CD8-positive, alpha-beta T cell (primary cell): ENCODE measurements at regions of chr4 and their contacts with region 1.

Region 1: DNA sequence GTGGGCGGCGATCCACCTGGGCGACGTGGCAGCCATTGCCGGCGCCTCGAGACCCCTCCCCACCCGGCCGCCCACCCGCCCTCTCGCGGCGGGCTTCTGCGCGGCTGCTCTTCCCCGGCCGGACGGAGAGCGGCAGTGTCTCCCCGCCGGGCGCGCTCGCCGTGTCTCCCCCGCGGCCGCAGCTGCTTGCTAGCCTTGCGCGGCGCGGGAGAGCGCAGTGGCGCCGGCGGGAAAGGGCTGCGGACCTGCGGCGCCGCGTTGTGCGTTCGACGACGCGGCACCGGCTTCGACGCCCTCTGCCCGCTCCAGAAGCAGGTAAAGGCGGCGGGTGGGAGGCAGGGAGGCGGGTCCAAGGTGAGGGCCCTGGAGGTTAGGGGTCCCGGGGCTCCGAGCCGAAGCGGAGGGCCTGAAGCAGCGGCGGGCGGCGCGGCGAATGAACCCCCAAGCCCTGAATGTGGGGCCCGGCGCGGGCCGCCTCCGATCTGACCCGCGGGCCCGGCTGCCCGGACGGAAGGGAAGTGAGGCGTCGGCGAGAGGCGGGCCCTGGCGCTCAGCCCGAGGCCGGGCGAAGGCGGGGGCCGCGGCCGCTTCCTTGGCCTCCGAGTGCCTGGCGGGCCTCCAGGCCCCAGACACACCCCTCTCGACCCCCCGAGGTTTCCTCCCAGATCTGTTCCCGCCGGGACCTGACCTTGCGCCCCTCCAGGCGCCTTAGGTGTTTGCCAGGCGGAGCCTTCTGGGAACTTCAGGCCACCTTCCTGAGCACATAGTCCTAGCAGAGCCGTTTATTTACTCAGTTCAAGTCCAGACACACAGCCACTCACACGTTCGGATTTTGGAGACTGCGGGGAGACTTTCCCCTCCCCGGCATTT is at the start of gene N4BP2:
- DNase-seq: peak; percentile 46 to 89 (median 71)
- ATAC-seq: peak; percentile 65
- H3K4me3 ChIP-seq: peak within 1 kb of the TSS; percentile 76 to 92
- H3K4me3 Mint-ChIP-seq: peak within 1 kb of the TSS; percentile 94
- H3K27ac ChIP-seq: peak within 1 kb of the TSS; percentile 70 to 87
- H3K27ac Mint-ChIP-seq: peak within 1 kb of the TSS; percentile 94
- H3K4me1 ChIP-seq: peaks cover 21% of the 10 kb centered on the region
- H3K4me1 Mint-ChIP-seq: peaks cover 36% of the 10 kb centered on the region
- H3K27me3 ChIP-seq: no peaks in the 10 kb centered on the region
- H3K27me3 Mint-ChIP-seq: no peaks in the 10 kb centered on the region
- CTCF ChIP-seq: peak; percentile 79
- total RNA-seq, gene N4BP2: 19.5 to 20.4 TPM

Region 2: DNA sequence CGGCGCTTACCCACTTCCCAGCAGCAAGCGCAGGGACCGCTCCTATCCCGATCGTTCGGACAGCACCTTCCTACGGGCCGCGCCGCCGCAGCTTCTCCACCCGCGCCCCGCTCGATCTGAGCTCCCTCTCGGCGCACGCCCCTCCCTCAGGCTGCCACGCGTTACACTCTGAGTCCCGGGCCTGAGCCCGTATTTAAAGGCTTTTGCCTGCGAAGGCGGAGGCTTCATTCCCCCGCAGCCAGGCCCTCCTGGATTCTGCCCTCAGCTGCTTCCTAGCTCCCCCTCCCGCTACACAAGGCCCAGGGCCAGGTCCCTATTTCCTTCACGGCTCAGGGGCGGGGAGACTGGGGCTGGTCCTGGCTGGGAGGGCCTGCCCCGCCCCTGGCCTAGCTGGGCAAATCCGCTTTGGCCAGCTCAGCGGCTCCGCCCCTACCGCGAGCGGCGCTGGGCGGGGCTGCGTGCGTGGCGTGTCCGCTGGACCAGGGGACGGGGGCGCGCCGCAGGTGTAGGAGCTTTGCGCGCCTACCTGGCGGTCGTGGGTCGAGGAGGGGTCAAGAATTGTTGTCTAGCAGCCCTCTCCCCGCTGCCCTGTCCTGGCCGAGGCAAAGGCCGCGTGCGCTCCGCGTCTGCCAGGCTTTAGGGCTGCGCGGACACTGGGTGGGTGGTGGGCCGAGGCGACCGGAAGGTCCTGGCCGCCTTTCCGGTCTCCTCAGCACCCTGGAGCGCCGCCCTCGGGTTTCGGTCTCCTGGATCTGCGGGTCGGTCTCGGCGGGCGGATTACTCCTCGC is 529.5 kb before region 1 on chr4 and contains the start of gene UGDH:
- CTCF ChIA-PET with region 1: no interaction called
- POLR2A ChIA-PET with region 1: no interaction called
- intact Hi-C with region 1: loop called in 1 of 2 experiments (anchors 5 kb)
- DNase-seq: peak; percentile 81 to 96 (median 90)
- ATAC-seq: peak; percentile 98
- H3K4me3 ChIP-seq: peak within 1 kb of the TSS; percentile 87 to 89
- H3K4me3 Mint-ChIP-seq: peak within 1 kb of the TSS; percentile 96
- H3K27ac ChIP-seq: peak within 1 kb of the TSS; percentile 68 to 74
- H3K27ac Mint-ChIP-seq: peak within 1 kb of the TSS; percentile 93
- H3K4me1 ChIP-seq: peaks cover 17% of the 10 kb centered on the region
- H3K4me1 Mint-ChIP-seq: peaks cover 24% of the 10 kb centered on the region
- H3K27me3 ChIP-seq: no peaks in the 10 kb centered on the region
- H3K27me3 Mint-ChIP-seq: no peaks in the 10 kb centered on the region
- CTCF ChIP-seq: no peak
- total RNA-seq, gene UGDH: 2.6 to 3.6 TPM

Region 3: DNA sequence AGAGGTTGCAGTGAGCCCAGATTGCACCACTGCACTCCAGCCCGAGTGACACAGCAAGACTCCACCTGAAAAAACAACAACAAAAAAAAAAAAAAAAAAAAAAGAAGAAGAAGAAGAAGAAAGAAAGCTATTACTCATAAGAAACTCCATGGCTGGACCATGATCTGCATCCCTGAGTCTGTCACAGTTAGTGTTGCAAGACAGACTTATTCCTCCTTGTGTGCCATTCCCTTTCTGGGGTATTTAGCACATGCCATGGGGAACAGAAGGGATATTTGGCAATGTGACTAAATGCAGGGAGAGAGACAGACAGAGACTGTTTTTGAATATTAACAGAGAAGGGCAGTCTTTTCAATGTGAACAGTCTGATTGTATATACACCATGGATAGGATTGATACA is 62.5 kb before region 1 on chr4:
- CTCF ChIA-PET with region 1: interaction called, 6 read pairs
- POLR2A ChIA-PET with region 1: no interaction called
- intact Hi-C with region 1: loop called in 1 of 2 experiments (anchors 5 kb)
- DNase-seq: no peak
- ATAC-seq: no peak
- H3K4me3 ChIP-seq: no peak overlapping the region
- H3K4me3 Mint-ChIP-seq: no peak overlapping the region
- H3K27ac ChIP-seq: no peak overlapping the region
- H3K27ac Mint-ChIP-seq: no peak overlapping the region
- H3K4me1 ChIP-seq: no peaks in the 10 kb centered on the region
- H3K4me1 Mint-ChIP-seq: no peaks in the 10 kb centered on the region
- H3K27me3 ChIP-seq: no peaks in the 10 kb centered on the region
- H3K27me3 Mint-ChIP-seq: no peaks in the 10 kb centered on the region
- CTCF ChIP-seq: no peak

Region 4: GRCh38 chr4:40193016-40193571 is 136.1 kb after region 1 on chr4:
- CTCF ChIA-PET with region 1: no interaction called
- POLR2A ChIA-PET with region 1: interaction called, 5 read pairs
- intact Hi-C with region 1: loop called (anchors 1 to 5 kb)
- DNase-seq: peak in 6 of 9 experiments; percentile 49 to 82 (median 65)
- ATAC-seq: peak; percentile 14
- H3K4me3 ChIP-seq: peak overlapping the region; percentile 36 to 42
- H3K4me3 Mint-ChIP-seq: peak overlapping the region; percentile 100
- H3K27ac ChIP-seq: peak overlapping the region; percentile 60 to 96
- H3K27ac Mint-ChIP-seq: peak overlapping the region; percentile 100
- H3K4me1 ChIP-seq: peaks cover 52% of the 10 kb centered on the region
- H3K4me1 Mint-ChIP-seq: peaks cover 64% of the 10 kb centered on the region
- H3K27me3 ChIP-seq: no peaks in the 10 kb centered on the region
- H3K27me3 Mint-ChIP-seq: no peaks in the 10 kb centered on the region
- CTCF ChIP-seq: no peak

Region 5: GRCh38 chr4:40238700-40239548 is 182.0 kb after region 1 on chr4:
- CTCF ChIA-PET with region 1: interaction called, 3 read pairs
- POLR2A ChIA-PET with region 1: interaction called, 3 read pairs
- intact Hi-C with region 1: loop called (anchors 5 kb)
- DNase-seq: peak; percentile 63 to 96 (median 73)
- ATAC-seq: peak; percentile 90
- H3K4me3 ChIP-seq: peak overlapping the region; percentile 46 to 48
- H3K4me3 Mint-ChIP-seq: peak overlapping the region; percentile 82
- H3K27ac ChIP-seq: peak overlapping the region; percentile 68 to 98
- H3K27ac Mint-ChIP-seq: peak overlapping the region; percentile 95
- H3K4me1 ChIP-seq: peaks cover 95% of the 10 kb centered on the region
- H3K4me1 Mint-ChIP-seq: peaks cover 94% of the 10 kb centered on the region
- H3K27me3 ChIP-seq: no peaks in the 10 kb centered on the region
- H3K27me3 Mint-ChIP-seq: no peaks in the 10 kb centered on the region
- CTCF ChIP-seq: no peak

Region 6: GRCh38 chr4:40316782-40317635 is 260.1 kb after region 1 on chr4:
- CTCF ChIA-PET with region 1: interaction called, 9 read pairs
- POLR2A ChIA-PET with region 1: interaction called, 5 read pairs
- intact Hi-C with region 1: loop called (anchors 2 kb)
- DNase-seq: peak; percentile 39 to 89 (median 62)
- ATAC-seq: peak; percentile 66
- H3K4me3 ChIP-seq: peak overlapping the region; percentile 38 to 43
- H3K4me3 Mint-ChIP-seq: peak overlapping the region; percentile 82
- H3K27ac ChIP-seq: peak overlapping the region; percentile 63 to 81
- H3K27ac Mint-ChIP-seq: peak overlapping the region; percentile 95
- H3K4me1 ChIP-seq: peaks cover 24% of the 10 kb centered on the region
- H3K4me1 Mint-ChIP-seq: peaks cover 45% of the 10 kb centered on the region
- H3K27me3 ChIP-seq: no peaks in the 10 kb centered on the region
- H3K27me3 Mint-ChIP-seq: no peaks in the 10 kb centered on the region
- CTCF ChIP-seq: peak; percentile 77

Region 7: DNA sequence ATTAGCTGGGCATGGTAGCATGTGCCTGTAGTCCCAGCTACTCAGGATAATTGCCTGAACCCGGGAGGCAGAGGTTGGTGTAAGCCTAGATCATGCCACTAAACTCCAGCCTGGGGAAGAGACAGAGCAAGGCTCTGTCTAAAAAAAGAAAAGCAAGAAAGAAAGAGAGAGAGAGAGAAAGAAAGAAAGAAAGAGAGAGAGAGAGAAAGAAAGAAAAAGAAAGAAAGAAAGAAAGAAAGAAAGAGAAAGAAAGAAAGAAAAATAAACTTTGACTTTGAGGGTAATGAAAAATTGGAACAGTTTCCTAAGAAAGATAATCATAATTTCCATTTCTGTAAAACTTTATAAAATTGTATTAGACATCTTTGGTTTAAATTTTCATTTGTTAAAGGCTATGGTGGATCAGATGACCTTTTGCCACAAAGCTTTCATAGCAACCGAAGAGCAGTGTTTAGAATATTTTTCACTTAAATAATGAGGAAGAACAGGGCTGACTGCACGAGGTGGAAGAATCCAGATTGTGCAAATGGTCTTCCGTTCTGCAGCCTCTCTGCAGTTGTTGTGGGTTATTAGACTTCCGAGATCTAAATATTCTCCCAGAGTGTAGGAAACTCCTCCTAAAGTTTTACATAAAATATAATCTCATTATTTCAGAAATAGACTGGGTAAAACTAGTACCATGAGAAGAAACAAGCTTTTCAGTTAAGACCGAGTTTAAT is 516.8 kb after region 1 on chr4:
- CTCF ChIA-PET with region 1: no interaction called
- POLR2A ChIA-PET with region 1: no interaction called
- intact Hi-C with region 1: no loop called
- DNase-seq: peak in 1 of 9 experiments; percentile 8
- ATAC-seq: no peak
- H3K4me3 ChIP-seq: no peak overlapping the region
- H3K4me3 Mint-ChIP-seq: no peak overlapping the region
- H3K27ac ChIP-seq: no peak overlapping the region
- H3K27ac Mint-ChIP-seq: no peak overlapping the region
- H3K4me1 ChIP-seq: no peaks in the 10 kb centered on the region
- H3K4me1 Mint-ChIP-seq: peaks cover 6% of the 10 kb centered on the region
- H3K27me3 ChIP-seq: no peaks in the 10 kb centered on the region
- H3K27me3 Mint-ChIP-seq: peaks cover 3% of the 10 kb centered on the region
- CTCF ChIP-seq: no peak

Region 8: DNA sequence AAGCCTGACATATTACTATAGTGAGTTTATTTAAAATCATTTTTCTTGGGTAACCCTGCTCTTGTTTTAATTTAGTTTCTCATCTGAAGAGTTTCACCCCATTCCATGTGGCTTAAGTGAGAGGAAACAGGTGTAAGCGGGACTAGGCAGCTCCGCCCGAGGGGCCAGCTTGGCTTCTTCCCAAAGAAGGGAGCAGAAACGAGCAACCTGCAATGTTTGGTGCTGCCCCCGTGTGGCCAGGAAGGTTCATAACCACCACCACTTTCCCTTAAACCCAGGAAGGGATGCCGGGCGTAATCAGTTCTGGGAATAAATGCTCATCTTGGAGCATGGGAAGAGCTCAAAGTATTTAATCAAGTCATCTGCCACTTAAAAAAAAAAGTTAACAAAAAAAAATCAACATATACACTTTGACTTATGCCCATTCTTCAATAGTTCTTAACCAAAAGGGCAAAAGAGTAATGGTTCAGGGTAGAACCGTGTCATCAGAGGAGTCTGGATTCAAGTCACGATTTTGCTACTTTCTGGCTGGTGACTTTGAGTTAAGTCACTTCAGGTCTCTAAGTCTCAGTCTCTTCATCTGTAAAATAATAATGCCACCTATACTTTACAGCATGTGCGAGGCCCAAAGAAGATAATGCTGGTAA is 840.7 kb after region 1 on chr4:
- CTCF ChIA-PET with region 1: interaction called, 6 read pairs
- POLR2A ChIA-PET with region 1: no interaction called
- intact Hi-C with region 1: loop called in 1 of 2 experiments (anchors 2 kb)
- DNase-seq: peak; percentile 9 to 70 (median 62)
- ATAC-seq: peak; percentile 55
- H3K4me3 ChIP-seq: no peak overlapping the region
- H3K4me3 Mint-ChIP-seq: peak overlapping the region; percentile 76
- H3K27ac ChIP-seq: no peak overlapping the region
- H3K27ac Mint-ChIP-seq: no peak overlapping the region
- H3K4me1 ChIP-seq: no peaks in the 10 kb centered on the region
- H3K4me1 Mint-ChIP-seq: peaks cover 2% of the 10 kb centered on the region
- H3K27me3 ChIP-seq: no peaks in the 10 kb centered on the region
- H3K27me3 Mint-ChIP-seq: peaks cover 2% of the 10 kb centered on the region
- CTCF ChIP-seq: peak; percentile 78